Activated CD4-positive, alpha-beta T cell treated with anti-CD3 and anti-CD28 coated beads for 36 hours (primary cell): ENCODE measurements at regions of chr7 and their contacts with region 1.

Region 1: DNA sequence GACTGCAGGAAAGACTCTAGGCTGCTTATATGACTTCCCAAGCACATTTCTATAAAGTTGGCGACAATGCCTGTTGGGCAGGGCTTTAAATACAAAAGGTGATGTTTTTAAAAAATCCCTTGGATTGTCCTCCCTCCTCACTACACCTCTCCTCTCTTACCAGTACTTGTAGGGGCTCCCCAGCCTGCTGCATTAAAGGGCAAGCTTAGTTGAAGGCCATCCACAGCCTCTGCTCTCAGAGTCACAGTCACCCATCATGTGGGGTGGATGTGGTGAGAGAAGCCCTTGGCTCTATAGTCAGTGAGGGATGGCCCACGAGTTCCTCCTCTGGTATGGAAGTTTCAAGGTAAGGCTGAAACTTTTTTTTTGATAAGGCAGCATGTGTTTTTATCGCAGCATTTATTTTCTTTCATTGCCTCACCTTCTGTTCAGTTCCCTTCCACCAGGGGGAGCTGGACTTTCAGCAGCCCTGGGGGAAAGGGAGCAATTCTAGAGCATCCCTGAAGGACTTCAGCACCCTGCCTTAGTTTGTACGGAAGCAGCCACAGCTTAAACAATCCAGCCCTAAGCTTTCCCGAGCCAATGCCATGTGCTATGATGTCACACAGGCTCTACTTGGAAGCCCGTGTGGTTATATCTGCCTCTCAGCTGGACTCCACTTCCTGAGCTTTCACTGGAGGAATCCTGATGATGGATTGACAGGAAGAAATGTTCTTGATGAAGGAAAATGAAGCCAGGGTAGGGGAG is 131.9 kb downstream of the CALCR start:
- DNase-seq: peak; percentile 62
- ATAC-seq: peak; percentile 58
- H3K4me3 Mint-ChIP-seq: no peak overlapping the region
- H3K27ac Mint-ChIP-seq: no peak overlapping the region
- H3K4me1 Mint-ChIP-seq: no peaks in the 10 kb centered on the region
- H3K27me3 Mint-ChIP-seq: no peaks in the 10 kb centered on the region

Region 2: DNA sequence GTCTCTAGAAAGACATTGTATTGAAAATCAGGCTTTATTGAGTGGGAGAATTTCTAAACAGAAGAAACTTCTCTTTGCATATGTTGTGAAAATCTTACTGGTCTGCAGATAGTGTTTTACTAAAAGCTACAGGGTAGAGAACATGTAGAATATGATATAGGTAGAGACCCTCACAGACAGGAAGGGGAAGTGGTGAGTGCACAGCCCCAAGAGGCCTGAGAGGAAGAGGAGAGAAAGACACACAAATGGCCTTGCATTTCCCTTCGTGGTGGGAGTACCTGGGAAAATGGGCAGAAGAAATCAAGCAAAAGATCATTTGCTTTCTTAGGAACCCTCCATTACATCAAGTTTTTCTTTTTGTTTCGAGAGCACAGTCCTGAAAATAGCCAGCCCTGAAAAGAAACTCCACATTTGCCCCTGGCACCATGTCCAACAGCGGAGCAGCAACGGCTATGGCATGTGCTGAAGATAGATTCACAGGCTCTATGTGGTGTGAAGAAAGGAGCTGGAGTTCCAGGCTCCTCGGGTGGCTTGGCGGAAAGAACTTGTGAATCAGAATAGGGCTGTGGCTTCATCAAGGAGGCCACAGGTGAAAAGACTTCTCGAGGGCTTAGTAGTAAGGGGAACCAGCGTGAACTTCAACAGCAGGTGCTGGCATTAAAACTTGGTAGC is 11.6 kb before region 1 on chr7:
- CTCF ChIA-PET with region 1: interaction called, 10 read pairs
- POLR2A ChIA-PET with region 1: no interaction called
- intact Hi-C with region 1: no loop called
- DNase-seq: no peak
- ATAC-seq: no peak
- H3K4me3 Mint-ChIP-seq: no peak overlapping the region
- H3K27ac Mint-ChIP-seq: no peak overlapping the region
- H3K4me1 Mint-ChIP-seq: no peaks in the 10 kb centered on the region
- H3K27me3 Mint-ChIP-seq: peaks cover under 1% of the 10 kb centered on the region